Uterus (tissue), 4 donors: ENCODE measurements at regions of chr2 and their contacts with region 1.

Region 1: GRCh38 chr2:44480068-44480467 is 118.3 kb downstream of the CAMKMT start:
- DNase-seq: no peak
- H3K4me3 ChIP-seq: no peak overlapping the region
- H3K27ac ChIP-seq: no peak overlapping the region
- H3K4me1 ChIP-seq: no peaks in the 10 kb centered on the region
- H3K27me3 ChIP-seq: no peaks in the 10 kb centered on the region
- CTCF ChIP-seq: no peak
- POLR2A ChIP-seq: no peak

Region 2: GRCh38 chr2:44310287-44310686 is 169.8 kb before region 1 on chr2:
- intact Hi-C with region 1: no loop called
- DNase-seq: no peak
- H3K4me3 ChIP-seq: no peak overlapping the region
- H3K27ac ChIP-seq: no peak overlapping the region
- H3K4me1 ChIP-seq: no peaks in the 10 kb centered on the region
- H3K27me3 ChIP-seq: no peaks in the 10 kb centered on the region
- CTCF ChIP-seq: no peak
- POLR2A ChIP-seq: no peak

Region 3: GRCh38 chr2:44543773-44544725 is 64.0 kb after region 1 on chr2:
- intact Hi-C with region 1: no loop called
- DNase-seq: no peak
- H3K4me3 ChIP-seq: no peak overlapping the region
- H3K27ac ChIP-seq: no peak overlapping the region
- H3K4me1 ChIP-seq: no peaks in the 10 kb centered on the region
- H3K27me3 ChIP-seq: no peaks in the 10 kb centered on the region
- CTCF ChIP-seq: no peak
- POLR2A ChIP-seq: no peak

Region 4: GRCh38 chr2:44955593-44956392 is 475.7 kb after region 1 on chr2:
- intact Hi-C with region 1: loop called (anchors 10 kb)
- DNase-seq: peak; percentile 32 to 64
- H3K4me3 ChIP-seq: no peak overlapping the region
- H3K27ac ChIP-seq: no peak overlapping the region
- H3K4me1 ChIP-seq: peaks cover 0 to 15% of the 10 kb centered on the region in 2 donors
- H3K27me3 ChIP-seq: peaks cover 5 to 15% of the 10 kb centered on the region in 2 donors
- CTCF ChIP-seq: peak; percentile 76 to 92 (median 82)
- POLR2A ChIP-seq: no peak